ENCODE measurements at regions of chr5 and their contacts with region 1.

Region 1: DNA sequence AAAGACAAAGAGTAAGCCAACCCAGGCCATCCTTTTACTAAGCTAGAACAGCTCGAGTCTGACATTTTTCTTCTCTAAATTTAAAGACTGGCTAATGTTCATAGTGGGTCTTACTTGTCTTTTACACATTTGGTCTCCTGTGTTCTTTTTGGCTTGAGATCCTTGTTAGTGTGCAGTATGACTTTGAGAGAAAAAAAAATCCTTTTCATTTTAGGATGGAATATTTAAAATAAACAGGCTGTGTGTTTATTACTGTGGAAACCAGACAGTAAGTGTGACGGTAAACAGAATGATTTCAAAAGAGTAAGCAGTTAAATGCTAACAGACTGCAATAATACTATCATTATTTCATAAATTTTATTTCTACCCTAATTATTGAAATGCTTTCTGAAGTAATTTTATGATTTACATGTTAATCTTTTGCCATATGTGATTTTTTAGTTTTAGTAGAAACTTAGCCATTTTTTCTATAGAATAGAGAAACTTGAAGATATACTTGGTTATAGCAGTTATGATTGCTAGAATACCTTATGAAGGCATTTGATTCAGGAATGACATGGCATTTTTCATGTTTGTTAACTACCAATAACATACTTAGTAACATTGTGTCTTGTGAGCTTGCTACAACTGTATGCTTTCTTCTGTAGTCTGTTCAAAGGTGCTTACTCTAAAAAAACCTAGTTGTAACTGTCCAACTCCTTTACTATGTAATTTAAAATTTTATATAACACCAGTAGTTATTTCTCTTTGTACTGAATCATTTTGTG is 92.4 kb downstream of the XRCC4 start:
- DNase-seq: no peak
- ATAC-seq: no peak
- H3K4me3 ChIP-seq: no peak overlapping the region
- H3K27ac ChIP-seq: no peak overlapping the region
- H3K4me1 ChIP-seq: no peaks in the 10 kb centered on the region
- H3K27me3 ChIP-seq: no peaks in the 10 kb centered on the region
- CTCF ChIP-seq: no peak

Region 2: DNA sequence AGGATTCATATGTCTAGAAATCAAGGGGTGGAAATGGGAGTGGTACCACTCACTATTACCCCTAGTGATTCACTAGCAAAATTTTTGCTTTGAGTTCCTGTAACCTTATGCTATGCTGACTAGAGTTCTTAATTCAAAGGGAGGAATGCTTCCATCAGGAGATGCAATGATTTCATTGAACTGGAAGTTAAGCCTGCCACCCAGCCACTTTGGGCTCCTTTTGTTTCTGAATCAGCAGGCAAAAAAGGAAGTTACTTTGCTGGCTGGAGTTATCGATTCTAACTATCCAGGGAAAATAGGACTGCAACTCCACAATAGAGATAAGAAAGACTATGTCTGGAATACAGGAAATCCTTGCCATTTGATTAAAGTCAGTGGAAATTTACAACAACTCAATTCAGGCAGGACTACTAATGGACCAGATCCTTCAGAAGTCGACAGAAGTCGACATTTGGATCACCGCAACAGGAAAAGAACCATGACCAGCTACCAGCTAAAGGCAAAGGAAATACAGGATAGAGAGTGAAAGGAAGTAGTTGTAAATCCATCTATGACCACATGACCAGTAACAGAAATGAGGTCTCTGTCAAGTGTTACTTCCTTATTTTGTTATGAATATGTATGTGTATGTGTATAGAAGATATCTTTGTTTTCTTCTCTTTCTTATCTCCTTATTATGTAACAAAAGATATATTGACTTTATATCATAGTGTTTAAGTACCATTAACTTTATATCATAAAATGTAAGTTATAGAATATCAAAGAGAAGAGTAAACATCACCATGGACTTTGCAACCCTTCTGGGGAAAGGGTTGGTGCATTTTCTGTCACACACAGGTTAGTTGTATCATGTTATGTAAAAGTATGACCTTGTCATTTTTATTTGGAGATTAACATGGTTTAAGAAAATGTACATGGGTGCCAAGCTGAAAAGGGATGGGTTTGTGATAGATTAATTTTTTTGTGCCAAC is 749.6 kb after region 1 on chr5:
- intact Hi-C with region 1: loop called in 1 of 2 experiments (anchors 5 kb)
- DNase-seq: no peak
- ATAC-seq: no peak
- H3K4me3 ChIP-seq: no peak overlapping the region
- H3K27ac ChIP-seq: no peak overlapping the region
- H3K4me1 ChIP-seq: no peaks in the 10 kb centered on the region
- H3K27me3 ChIP-seq: no peaks in the 10 kb centered on the region
- CTCF ChIP-seq: no peak

Measured in psoas muscle (tissue), 8 donors.